ENCODE measurements at regions of chr3 and their contacts with region 1.

Region 1: GRCh38 chr3:119034256-119035013 is at the start of gene IGSF11:
- DNase-seq: peak; percentile 82
- ATAC-seq: peak; percentile 93
- H3K4me3 Mint-ChIP-seq: peak within 1 kb of the TSS; percentile 77
- H3K27ac Mint-ChIP-seq: no peak within 1 kb of the TSS
- H3K4me1 Mint-ChIP-seq: peaks cover 6% of the 10 kb centered on the region
- H3K27me3 Mint-ChIP-seq: peaks cover 33% of the 10 kb centered on the region
- total RNA-seq, gene IGSF11: 0.09 to 0.23 TPM

Region 2: DNA sequence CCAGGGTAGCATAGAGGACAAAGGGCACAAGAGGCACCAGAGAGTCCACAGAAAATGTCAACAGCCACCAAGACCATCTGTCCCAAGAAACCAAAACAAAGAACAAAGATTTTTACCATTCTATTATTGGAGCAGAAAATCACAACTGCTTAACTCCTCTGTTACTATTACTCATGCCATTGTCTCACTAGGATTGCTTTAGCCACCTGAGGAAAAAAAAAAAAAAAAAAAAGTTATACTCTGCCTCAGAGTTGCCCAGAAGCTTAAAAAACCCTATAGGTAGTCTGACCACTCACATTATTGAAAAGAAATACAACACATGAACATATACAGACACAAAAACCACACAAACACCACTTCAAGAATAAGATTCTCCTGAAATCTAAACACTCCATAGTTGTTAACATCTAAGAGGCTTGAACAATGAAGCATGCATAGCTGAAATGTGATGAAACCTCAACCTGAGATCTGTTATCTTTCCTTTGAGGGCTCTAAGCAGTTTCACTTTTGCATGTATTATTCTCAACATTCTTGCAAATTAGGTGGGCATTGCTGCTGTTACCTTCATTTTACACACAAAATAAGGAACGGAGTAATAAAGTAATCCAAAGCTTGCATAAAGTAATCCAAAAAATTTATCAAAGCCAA is 85.2 kb before region 1 on chr3:
- CTCF ChIA-PET with region 1: no interaction called
- POLR2A ChIA-PET with region 1: no interaction called
- intact Hi-C with region 1: loop called in 1 of 2 experiments (anchors 5 kb)
- DNase-seq: no peak
- ATAC-seq: peak; percentile 41
- H3K4me3 Mint-ChIP-seq: no peak overlapping the region
- H3K27ac Mint-ChIP-seq: peak overlapping the region; percentile 58
- H3K4me1 Mint-ChIP-seq: peaks cover 47% of the 10 kb centered on the region
- H3K27me3 Mint-ChIP-seq: no peaks in the 10 kb centered on the region

Region 3: DNA sequence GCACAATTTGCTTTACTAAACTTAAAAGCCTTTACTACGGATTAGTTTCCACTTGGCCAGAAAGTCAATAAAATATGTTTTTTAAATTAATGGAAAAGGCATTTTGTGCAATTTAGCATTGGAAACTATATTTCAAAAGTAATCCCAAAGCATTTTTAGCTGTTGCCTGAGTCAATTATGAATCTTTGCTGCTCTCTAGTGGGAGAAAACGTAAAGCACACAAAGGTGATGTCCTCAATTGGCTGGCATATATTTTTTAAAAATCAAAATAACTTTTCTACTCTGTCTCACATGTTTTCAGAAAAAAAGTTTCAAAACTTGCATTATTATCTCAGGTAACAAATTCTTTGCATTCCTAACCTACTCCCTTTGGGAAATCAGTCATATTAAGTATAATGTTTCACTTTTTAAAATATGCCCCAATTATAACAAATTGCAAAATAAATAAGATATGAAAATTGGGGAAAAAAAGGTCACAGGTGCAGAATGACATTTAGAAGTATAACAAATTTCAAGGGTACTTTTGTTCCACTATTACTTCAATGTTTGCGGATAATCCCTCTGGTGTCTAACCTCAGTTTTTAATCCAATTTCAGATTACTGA is 64.3 kb after region 1 on chr3:
- CTCF ChIA-PET with region 1: interaction called, 3 read pairs
- POLR2A ChIA-PET with region 1: no interaction called
- intact Hi-C with region 1: loop called in 1 of 2 experiments (anchors 2 kb)
- DNase-seq: no peak
- ATAC-seq: peak; percentile 36
- H3K4me3 Mint-ChIP-seq: no peak overlapping the region
- H3K27ac Mint-ChIP-seq: no peak overlapping the region
- H3K4me1 Mint-ChIP-seq: no peaks in the 10 kb centered on the region
- H3K27me3 Mint-ChIP-seq: no peaks in the 10 kb centered on the region

Region 4: DNA sequence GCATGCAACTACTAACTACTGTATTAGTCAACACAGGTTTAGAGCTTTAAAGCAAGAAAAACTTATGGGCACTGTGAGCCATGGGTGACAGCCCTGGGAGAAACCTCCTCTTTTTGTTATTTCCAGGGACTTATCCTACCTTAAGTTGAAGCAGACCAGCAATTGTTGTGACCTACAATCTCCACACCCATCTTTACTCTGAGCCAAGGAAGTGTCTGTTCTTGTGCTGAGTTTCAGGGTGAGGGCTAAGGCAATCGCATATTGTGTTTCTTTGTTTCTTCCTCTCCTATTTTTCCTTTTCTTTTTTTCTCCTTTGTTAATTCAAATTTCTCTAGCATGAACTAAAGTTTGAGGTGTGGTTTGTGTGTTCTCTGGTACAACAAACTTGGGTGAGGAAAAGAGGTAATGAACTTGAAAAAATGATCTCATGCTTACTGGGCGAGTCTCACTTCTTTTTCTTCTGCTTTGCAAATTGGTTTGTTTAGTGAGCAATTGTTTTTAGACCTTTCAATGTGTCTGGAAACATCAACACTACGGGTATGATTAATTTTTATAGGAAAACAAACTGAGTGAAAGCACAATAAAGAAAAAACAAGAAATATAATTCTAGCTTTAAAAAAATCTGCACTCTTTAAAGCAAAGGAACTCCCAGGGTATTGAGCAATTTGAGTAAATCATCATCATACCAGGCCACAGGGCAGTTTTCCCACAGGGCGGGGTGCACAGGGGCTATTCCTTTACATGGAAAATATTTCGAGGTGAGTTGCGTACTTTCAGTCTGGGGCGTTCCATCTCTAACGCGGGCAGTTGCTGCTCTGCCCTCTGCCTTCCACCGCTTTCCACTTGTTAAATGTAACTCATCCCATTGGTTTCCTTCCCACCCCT is 141.7 kb after region 1 on chr3:
- CTCF ChIA-PET with region 1: no interaction called
- POLR2A ChIA-PET with region 1: no interaction called
- intact Hi-C with region 1: no loop called
- DNase-seq: no peak
- ATAC-seq: no peak
- H3K4me3 Mint-ChIP-seq: no peak overlapping the region
- H3K27ac Mint-ChIP-seq: no peak overlapping the region
- H3K4me1 Mint-ChIP-seq: peaks cover 8% of the 10 kb centered on the region
- H3K27me3 Mint-ChIP-seq: peaks cover 2% of the 10 kb centered on the region

Measured in activated CD4-positive, alpha-beta T cell treated with anti-CD3 and anti-CD28 coated beads for 36 hours (primary cell).